H1 (cell line): ENCODE measurements at regions of chr16 and their contacts with region 1.

Region 1: GRCh38 chr16:85420501-85421337 is 192.4 kb upstream of the GSE1 start:
- DNase-seq: peak in 1 of 2 experiments; percentile 96
- H3K4me3 ChIP-seq: no peak overlapping the region
- H3K27ac ChIP-seq: no peak overlapping the region
- H3K4me1 ChIP-seq: peaks cover 0 to 21% (median 5%) of the 10 kb centered on the region in 4 experiments; a peak in 5 of 7 replicates
- H3K27me3 ChIP-seq: no peaks in the 10 kb centered on the region
- CTCF ChIP-seq: peak; percentile 98 to 99 (median 99)
- EP300 ChIP-seq: no peak
- POLR2A ChIP-seq: no peak
- RAD21 ChIP-seq: peak; percentile 77 to 81

Region 2: GRCh38 chr16:85151603-85152413 is 268.9 kb before region 1 on chr16:
- CTCF ChIA-PET with region 1: no interaction called
- POLR2A ChIA-PET with region 1: no interaction called
- DNase-seq: no peak
- H3K4me3 ChIP-seq: no peak overlapping the region
- H3K27ac ChIP-seq: no peak overlapping the region
- H3K4me1 ChIP-seq: peaks cover 0 to 2% (median 0%) of the 10 kb centered on the region in 4 experiments; a peak in 2 of 7 replicates
- H3K27me3 ChIP-seq: no peaks in the 10 kb centered on the region
- CTCF ChIP-seq: no peak
- EP300 ChIP-seq: no peak
- POLR2A ChIP-seq: no peak
- RAD21 ChIP-seq: no peak

Region 3: GRCh38 chr16:85347213-85347591 is 73.5 kb before region 1 on chr16:
- CTCF ChIA-PET with region 1: interaction called, 38 read pairs
- POLR2A ChIA-PET with region 1: no interaction called
- DNase-seq: peak in 1 of 2 experiments; percentile 74
- H3K4me3 ChIP-seq: no peak overlapping the region
- H3K27ac ChIP-seq: no peak overlapping the region
- H3K4me1 ChIP-seq: peaks cover 0 to 13% (median under 1%) of the 10 kb centered on the region in 4 experiments; a peak in 4 of 7 replicates
- H3K27me3 ChIP-seq: no peaks in the 10 kb centered on the region
- CTCF ChIP-seq: peak; percentile 89 to 95 (median 93)
- EP300 ChIP-seq: no peak
- POLR2A ChIP-seq: no peak
- RAD21 ChIP-seq: peak; percentile 91 to 95

Region 4: DNA sequence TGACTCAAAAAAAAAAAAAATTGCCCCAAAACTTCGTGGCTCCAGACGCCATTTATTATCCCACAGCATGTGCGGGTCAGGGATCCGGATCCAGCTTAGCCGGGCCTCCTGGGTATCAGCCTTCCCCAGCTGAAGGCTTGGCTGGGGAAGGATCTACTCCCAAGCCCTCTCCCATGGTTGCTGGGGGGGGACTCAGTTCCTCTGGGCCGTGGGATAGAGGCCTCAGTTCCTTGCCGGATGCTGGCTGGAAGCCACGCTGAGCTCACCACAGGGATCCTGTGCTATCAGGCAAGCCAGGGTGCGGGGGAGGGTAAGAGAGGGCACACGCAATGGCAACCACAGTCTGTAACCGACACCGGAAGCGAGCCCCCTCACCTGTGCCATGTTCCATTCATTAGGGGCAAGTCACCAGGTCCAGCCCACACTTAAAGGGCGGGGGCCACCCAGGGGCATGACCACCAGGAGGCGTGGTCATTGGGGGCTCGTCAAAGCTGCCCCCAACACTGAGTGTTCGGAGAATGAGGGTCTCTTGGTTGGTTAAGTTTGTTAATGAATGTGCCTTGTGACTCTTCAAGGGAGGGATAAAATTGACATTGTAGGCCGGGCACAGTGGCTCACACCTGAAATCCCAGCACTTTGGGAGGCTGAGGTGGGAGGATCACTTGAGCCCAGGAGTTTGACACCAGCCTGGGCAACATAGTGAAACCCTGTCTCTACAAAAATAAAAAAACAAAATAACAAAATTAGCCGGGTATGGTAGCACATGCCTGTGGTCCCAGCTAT is 17.6 kb before region 1 on chr16:
- CTCF ChIA-PET with region 1: interaction called, 182 read pairs
- POLR2A ChIA-PET with region 1: interaction called, 6 read pairs
- DNase-seq: peak in 1 of 2 experiments; percentile 59
- H3K4me3 ChIP-seq: no peak overlapping the region
- H3K27ac ChIP-seq: no peak overlapping the region
- H3K4me1 ChIP-seq: peaks cover 3 to 17% (median 6%) of the 10 kb centered on the region in 4 experiments; a peak in 6 of 7 replicates
- H3K27me3 ChIP-seq: no peaks in the 10 kb centered on the region
- CTCF ChIP-seq: no peak
- EP300 ChIP-seq: no peak
- POLR2A ChIP-seq: no peak
- RAD21 ChIP-seq: no peak

Region 5: DNA sequence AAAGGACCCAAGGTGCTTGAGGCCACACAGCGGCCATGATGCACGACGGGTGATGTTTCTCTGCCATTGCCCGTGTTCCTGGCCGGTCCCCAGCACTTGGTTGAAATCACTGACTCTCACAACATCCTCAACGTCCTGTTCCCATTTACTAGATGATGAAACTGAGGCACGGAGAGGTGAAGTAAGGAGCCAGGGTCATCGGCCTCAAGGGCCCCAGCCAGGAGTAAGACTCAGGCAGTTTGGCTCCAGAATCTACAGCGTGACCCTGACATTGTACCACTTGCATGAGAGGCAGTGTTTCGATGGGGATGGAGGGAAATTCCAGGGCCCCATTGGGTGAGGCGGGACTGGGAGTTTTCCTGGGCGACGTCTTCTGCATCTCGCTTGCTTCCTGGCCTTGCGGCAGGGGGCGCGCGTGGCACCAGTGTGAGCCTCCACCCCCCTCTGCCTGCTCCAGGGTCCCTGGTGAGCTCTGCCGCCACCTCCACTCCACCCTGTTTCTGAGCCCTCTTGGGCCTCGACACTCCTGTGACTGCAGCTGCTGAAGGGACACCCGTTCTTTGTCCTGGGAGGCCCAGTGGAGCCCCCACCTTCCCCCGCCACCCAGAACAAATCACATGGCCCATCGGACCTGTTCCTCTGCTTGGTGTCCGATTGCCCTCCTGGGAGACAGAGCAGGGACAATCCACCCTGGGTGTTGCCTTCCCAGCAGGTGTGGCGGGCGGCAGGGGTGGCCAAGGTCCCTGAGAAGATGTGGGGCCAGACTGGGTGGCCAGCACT is 59.4 kb after region 1 on chr16:
- CTCF ChIA-PET with region 1: interaction called, 16 read pairs
- POLR2A ChIA-PET with region 1: no interaction called
- DNase-seq: peak in 1 of 2 experiments; percentile 73
- H3K4me3 ChIP-seq: no peak overlapping the region
- H3K27ac ChIP-seq: no peak overlapping the region
- H3K4me1 ChIP-seq: peaks cover 0 to 6% (median 1%) of the 10 kb centered on the region in 4 experiments; a peak in 4 of 7 replicates
- H3K27me3 ChIP-seq: no peaks in the 10 kb centered on the region
- CTCF ChIP-seq: peak; percentile 27 to 59 (median 37)
- EP300 ChIP-seq: no peak
- POLR2A ChIP-seq: no peak
- RAD21 ChIP-seq: peak; percentile 18 to 40; a peak in 2 of 4 replicates

Region 6: GRCh38 chr16:85541980-85542900 is 121.5 kb after region 1 on chr16:
- CTCF ChIA-PET with region 1: interaction called, 12 read pairs
- POLR2A ChIA-PET with region 1: no interaction called
- DNase-seq: no peak
- H3K4me3 ChIP-seq: no peak overlapping the region
- H3K27ac ChIP-seq: no peak overlapping the region
- H3K4me1 ChIP-seq: peaks cover 0 to 14% (median 9%) of the 10 kb centered on the region in 4 experiments; a peak in 6 of 7 replicates
- H3K27me3 ChIP-seq: no peaks in the 10 kb centered on the region
- CTCF ChIP-seq: no peak
- EP300 ChIP-seq: no peak
- POLR2A ChIP-seq: no peak
- RAD21 ChIP-seq: no peak

Region 7: DNA sequence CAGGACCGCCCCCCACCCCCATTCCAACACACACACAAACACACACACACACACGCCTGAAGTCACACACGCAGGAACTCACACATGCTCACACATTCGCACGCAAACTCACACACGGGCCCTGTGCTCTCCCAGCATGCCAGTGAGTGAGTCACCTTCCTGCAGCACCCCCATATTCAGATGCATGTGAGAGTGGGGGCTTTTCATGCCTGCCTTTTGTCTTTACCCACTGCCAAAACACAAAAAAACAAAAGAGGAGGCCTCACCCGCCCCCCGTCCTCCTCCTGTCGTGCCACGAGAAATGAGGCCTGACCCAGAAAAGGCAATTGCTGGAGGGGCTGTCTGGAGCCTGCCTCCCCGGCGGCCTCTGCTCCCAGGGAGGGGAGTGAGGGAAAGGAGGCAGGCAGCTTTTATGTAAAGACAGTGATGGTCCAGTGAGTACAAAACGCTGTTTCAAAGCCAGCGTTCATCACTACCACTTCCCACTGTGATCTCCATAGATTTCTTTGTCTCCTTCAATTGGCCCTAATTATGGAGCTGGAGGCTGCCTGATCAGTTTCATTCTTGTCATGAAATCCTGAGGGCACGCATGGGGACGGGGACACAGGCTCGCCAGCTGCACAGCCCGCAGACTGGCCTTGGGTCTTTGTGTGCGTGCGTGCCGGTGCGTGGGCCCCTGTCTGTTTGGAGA is 162.9 kb after region 1 on chr16:
- CTCF ChIA-PET with region 1: interaction called, 18 read pairs
- POLR2A ChIA-PET with region 1: no interaction called
- DNase-seq: peak in 1 of 2 experiments; percentile 51
- H3K4me3 ChIP-seq: peak overlapping the region in 2 of 4 experiments; percentile 14 to 31; a peak in 4 of 8 replicates
- H3K27ac ChIP-seq: no peak overlapping the region
- H3K4me1 ChIP-seq: peaks cover 32 to 84% (median 78%) of the 10 kb centered on the region in 4 experiments
- H3K27me3 ChIP-seq: peaks cover 0 to 32% (median 24%) of the 10 kb centered on the region in 4 experiments; a peak in 5 of 7 replicates
- CTCF ChIP-seq: no peak
- EP300 ChIP-seq: no peak
- POLR2A ChIP-seq: 0 out of 3 replicates have a peak, but pooled peaks of 1 of the 2 experiments have one; percentile 19
- RAD21 ChIP-seq: no peak

Region 8: DNA sequence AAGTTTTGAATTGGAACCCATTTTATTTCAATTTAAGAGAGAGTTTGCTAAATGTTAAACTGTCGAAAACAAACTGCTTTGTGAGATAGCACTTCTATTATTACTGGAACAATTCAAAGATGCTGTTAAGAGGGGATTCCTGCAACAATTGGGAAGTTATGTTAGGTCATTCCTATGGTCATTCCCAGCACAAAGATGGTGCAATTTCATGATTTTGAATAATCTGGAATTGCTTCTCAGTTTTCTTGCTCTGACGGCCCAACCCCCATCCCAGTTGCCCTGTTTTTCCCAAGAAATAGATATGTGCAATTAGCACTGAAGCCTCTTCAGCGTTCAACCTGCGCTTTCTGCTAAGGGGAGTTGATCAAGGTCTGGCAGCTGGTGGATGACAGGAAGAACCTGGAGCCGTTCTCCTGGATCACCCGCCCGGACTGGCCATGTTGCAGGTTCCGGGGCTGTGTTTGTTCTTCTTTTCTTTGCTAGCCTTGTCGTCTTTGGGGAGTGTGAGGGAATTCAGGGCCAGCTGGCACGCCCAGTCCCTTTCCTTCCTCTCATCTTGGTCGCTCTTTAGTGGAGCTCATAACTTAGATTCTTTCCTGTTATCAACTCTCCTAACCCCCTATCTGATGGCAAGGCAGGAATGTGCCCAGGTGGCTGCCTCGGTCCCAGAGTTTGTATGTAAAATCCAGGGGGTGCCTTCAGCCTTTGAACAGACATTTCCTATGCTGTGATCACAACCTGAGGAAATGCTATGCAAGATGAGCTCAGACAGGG is 449.3 kb after region 1 on chr16:
- CTCF ChIA-PET with region 1: no interaction called
- POLR2A ChIA-PET with region 1: no interaction called
- DNase-seq: no peak
- H3K4me3 ChIP-seq: peak overlapping the region in 1 of 4 experiments; percentile 5; a peak in 1 of 8 replicates
- H3K27ac ChIP-seq: no peak overlapping the region
- H3K4me1 ChIP-seq: peaks cover 0 to 5% (median 2%) of the 10 kb centered on the region in 4 experiments; a peak in 4 of 7 replicates
- H3K27me3 ChIP-seq: no peaks in the 10 kb centered on the region; a peak in 1 of 7 replicates
- CTCF ChIP-seq: no peak
- EP300 ChIP-seq: no peak
- POLR2A ChIP-seq: no peak
- RAD21 ChIP-seq: no peak